GM10248 (cell line): ENCODE measurements at regions of chr20 and their contacts with region 1.

Region 1: DNA sequence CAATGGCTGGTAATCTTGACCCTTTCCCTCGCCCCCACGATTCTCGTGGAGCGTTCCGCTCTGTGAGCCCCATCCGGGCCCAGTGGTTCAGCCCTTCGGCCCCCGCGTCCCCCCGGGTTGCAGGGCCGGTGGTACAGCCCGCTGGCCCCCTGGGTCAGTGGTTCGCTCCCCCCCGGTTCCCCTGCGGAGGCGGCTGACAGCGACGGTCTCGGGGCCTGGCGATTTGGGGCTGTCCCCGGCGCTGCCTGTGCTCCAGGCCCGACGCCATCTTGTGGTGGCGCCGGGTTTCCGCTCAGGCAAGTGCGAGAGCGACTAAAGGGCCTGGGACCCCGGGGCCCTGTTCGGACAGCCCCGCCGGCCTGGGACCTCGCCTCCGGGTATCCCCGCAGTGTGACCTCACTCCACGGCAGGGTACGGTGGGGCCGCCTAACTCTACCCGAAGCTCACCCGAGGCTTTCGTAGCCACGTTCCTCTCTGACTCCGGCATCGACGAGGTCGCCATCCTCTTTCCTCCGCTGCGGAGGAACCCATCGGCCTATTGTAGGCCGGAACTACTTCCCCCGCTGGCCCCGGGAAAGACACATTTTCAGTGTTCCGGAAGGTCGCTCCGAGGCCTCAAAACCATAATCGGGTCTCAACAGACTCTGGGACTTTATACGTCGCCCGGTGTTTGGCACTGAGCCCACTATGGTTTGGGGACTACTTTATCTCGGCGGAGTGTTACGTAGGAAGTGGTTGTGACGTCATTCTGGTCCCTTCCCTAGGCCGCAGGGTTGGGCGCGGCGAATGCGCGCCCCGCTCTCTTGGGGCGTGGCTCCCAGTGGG is at the start of gene ZNF335:
- DNase-seq: peak; percentile 99
- CTCF ChIP-seq: no peak

Region 2: DNA sequence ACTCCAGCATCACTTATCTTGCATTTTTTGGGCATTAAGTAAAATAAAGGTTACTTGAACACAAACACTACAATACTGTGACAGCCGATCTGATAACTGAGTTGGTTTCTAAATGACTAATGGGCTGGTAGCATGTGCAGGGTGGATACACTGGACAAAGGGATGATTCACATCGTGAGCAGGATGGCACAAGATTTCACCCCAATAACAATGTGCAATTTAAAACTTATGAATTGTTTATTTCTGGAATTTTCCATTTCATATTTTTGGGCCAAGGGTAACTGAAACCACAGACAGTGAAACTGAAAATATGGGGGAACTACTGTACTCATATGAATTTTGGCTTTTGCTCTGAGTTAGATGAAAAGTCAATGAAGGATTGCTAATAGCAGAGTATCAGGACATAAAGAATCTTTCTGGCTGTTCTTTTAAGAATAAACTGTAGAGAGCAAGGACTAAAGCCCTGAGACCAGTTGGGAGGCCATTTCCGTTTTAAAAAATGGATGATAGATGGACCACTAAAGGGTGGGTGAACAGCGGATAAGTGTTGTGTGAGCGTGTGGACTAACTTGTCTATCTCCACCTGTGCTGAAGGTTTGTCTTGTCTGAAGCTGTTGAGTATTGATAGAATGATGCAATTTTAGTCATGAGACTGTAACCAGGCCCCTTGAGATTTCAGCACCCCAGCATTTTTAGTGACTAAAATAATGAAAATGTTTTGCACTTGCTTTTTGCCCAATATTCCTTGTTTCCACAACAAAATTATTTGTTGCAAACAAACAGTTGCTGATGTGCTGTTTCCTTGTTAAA is 464.7 kb before region 1 on chr20:
- CTCF ChIA-PET with region 1: no interaction called
- POLR2A ChIA-PET with region 1: no interaction called
- DNase-seq: no peak
- CTCF ChIP-seq: no peak

Region 3: DNA sequence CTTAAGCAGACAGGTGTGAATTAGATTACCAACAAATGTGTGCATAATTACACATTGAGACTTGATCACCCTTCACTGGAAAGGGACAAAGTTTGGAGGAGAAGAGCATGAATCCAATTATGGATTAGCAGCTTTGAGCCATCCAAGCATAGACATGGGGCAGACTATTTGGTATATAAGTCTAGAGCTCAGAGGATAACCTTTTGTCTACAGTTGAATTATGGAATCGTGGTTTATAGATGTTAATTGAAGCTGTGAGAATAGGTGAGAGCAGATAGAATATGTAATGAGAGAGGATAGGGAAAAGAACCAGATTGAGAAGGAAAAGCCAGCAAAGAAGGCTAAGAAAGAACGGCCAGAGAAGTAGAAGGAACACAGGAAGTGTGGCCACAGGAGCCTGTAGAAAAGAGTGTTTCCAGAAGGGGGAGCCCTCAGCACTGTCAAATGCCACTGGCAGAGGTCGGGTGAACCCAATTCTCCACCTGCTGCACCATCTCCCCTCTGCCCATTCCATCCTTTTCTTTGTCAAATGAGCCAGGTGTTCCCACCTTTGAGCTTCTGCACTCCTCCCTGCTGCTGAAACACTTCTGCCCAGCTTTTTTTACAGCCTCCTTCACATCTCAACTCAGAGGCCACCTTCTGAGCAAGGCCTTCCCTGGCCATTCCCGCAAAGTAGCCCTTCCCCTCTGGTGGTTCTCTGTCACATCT is 172.8 kb before region 1 on chr20:
- CTCF ChIA-PET with region 1: interaction called, 21 read pairs
- POLR2A ChIA-PET with region 1: no interaction called
- DNase-seq: peak; percentile 73
- CTCF ChIP-seq: peak; percentile 69

Region 4: DNA sequence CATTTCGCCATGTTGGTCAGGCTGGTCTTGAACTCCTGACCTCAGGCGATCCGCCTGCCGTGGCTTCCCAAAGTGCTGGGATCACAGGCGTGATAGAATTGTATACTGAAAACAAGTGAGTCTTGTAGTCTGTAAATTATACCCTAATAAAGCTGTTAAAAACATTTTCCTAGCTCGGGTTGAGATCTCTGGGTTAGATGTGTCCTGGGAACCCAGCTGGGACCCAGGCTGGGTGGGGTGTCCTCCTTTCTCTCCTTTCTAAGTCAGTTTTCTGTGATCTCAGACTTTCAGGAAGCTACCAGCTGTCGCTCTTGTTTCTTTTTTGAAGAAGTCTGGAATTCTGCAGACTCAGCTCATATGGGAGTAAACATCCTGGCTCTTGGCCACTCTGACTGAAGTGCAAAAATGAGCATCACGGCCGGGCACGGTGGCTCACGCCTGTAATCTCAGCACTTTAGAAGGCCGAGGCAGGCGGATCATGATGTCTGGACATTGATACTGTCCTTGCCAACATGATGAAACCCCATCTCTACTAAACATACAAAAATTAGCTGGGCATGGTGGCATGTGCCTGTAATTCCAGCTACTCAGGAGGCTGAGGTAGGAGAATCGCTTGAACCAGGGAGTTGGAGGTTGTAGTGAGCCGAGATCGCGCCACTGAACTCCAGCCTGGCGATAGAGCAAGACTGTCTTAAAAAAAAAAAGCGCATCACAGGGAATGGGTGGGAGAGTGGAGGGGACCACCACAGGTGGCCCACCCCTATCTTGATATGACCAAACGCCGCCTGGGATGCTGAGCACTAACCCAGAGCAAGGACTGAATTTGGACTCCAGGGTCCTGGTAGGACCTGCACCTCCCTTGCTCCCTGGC is 47.3 kb before region 1 on chr20:
- CTCF ChIA-PET with region 1: interaction called, 10 read pairs
- POLR2A ChIA-PET with region 1: no interaction called
- DNase-seq: no peak
- CTCF ChIP-seq: no peak

Region 5: DNA sequence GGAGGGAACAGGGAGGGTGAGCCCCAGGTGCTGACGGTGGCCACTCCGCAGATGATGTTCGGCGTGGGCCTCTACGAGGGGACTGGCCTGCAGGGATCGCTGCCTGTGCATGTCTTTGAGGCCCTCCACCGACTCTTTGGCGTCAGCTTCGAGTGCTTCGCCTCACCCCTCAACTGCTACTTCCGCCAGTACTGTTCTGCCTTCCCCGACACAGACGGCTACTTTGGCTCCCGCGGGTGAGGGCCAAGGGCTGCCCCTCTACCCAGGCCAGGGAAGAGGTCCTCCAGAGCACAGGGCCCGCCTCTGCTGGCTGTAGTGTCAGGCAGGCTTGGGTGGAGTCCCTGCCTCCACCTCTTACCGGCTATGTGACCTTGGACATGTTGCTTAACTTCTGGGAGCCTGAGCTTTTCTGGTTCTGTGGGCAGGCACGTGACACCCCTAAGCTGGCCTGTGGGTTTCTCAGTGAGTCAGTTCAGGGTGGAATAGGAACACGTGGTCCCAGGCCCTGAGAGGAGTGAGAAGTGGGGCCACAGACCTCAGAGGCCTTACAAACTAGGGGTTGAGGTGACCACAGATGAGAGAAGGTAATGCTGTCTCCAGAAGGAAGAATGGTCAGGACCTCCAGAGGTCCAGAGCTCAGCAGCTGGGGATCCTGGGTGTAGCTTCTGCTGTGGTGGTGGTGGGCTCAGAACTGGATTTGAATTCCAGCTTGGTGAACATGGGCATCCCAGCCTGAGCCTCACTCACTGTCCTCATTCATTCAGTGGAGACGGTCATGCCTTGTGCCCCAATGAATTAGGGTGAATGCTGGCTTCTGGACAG is 25.5 kb before region 1 on chr20:
- CTCF ChIA-PET with region 1: interaction called, 33 read pairs
- POLR2A ChIA-PET with region 1: interaction called, 9 read pairs
- DNase-seq: no peak
- CTCF ChIP-seq: no peak

Region 6: DNA sequence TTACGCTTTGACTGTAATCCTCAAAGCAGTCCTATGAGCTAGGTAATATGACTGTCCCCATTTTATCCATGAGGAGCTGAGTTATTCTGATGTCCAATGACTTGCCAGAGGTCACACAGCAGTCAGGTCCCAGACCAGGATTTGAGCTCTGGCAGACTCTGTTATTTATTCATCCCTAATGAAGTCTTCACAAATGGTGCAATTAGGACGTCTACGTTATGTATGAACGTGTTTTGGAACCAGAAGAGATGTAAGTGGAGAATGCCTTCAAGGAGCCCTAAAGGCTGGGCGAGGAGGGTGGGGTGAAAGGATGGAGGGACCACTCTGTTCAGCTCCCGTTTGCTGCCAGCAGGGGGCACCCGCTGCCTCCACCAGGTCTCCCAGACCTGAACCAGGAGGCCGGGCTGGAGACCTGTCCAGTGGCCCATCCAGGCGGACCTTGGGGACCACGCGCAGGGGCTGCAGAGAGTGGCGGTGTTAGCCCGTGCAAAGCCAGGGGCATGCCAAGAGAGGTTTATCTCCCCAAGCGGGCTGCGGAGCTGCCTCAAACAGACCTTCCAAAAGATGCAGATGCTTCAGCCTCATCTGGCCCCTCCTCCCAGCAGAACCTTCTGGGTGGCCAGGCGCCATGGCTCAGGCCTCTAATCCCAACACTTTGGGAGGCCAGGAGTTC is 15.4 kb after region 1 on chr20:
- CTCF ChIA-PET with region 1: interaction called, 39 read pairs
- POLR2A ChIA-PET with region 1: no interaction called
- DNase-seq: peak; percentile 87
- CTCF ChIP-seq: peak; percentile 91